ENCODE measurements at regions of chr7 and their contacts with region 1.

Region 1: DNA sequence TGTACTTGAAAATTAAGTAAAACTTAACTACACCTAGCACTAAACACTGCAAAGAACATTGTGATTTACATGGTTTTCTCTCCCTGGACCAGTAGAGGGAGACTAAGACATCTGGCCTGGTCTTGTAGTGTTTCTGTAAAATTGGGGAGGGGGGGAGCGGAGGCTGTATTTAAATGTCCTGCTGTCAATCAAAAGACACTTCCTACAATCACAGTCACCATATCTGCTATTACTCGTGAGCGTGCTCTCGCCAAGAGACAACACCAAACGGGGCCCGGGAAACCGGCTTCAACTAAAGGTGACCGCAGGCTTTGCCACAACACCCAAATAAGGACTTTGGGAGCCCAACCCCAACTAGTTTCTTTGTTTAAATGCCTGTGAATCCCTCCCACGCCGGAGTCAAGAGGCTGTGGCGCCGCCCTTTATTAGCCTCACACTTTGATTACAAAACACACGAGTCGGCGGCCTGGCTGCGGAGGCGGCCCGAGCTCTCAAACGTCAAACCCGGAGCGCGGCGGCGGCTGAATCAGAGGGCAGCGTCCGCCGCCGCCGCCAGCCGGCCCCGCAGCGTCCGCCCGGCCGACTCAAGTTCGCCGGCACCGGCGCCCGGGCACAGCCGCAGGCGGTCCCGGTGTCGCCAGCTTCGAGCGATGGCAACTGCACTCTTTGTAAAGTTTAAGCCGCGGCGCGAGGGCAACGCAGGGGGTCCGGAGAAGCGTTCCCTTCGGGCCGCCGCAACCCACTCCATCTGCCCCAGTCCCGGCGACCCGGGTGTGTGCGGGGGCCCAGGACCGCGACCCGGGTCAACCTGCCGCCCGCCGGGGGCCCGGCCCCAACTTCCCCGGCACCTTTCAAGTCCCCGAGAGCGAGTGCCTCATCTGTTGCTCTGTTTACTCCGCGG is 1.3 kb downstream of the KDM7A start:
- DNase-seq: peak; percentile 96
- ATAC-seq: peak; percentile 74
- H3K4me3 ChIP-seq: peak overlapping the region; percentile 80 to 93 (median 92)
- H3K27ac ChIP-seq: peak overlapping the region; percentile 81
- H3K4me1 ChIP-seq: peaks cover 59% of the 10 kb centered on the region
- H3K27me3 ChIP-seq: no peaks in the 10 kb centered on the region
- CTCF ChIP-seq: peak; percentile 85
- EP300 ChIP-seq: peak in 1 of 2 experiments; percentile 21; a peak in 1 of 4 replicates
- POLR2A ChIP-seq: peak in 1 of 2 experiments; percentile 46; a peak in 3 of 4 replicates
- RAD21 ChIP-seq: peak; percentile 73

Region 2: GRCh38 chr7:140192620-140193019 is 17.1 kb after region 1 on chr7:
- CTCF ChIA-PET with region 1: no interaction called
- POLR2A ChIA-PET with region 1: interaction called, 11 read pairs
- in situ Hi-C with region 1: no loop called
- intact Hi-C with region 1: no loop called
- DNase-seq: no peak
- ATAC-seq: no peak
- H3K4me3 ChIP-seq: no peak overlapping the region
- H3K27ac ChIP-seq: no peak overlapping the region
- H3K4me1 ChIP-seq: peaks cover 24% of the 10 kb centered on the region
- H3K27me3 ChIP-seq: peaks cover 0 to 7% of the 10 kb centered on the region in 2 experiments; a peak in 1 of 5 replicates
- CTCF ChIP-seq: no peak
- EP300 ChIP-seq: no peak
- POLR2A ChIP-seq: no peak
- RAD21 ChIP-seq: no peak

Region 3: GRCh38 chr7:140230861-140231770 is 55.6 kb after region 1 on chr7:
- CTCF ChIA-PET with region 1: no interaction called
- POLR2A ChIA-PET with region 1: interaction called, 128 read pairs
- in situ Hi-C with region 1: loop called (anchors 5 kb)
- intact Hi-C with region 1: loop called (anchors 1 kb)
- DNase-seq: peak; percentile 93
- ATAC-seq: peak; percentile 78
- H3K4me3 ChIP-seq: peak overlapping the region; percentile 57 to 76 (median 60)
- H3K27ac ChIP-seq: peak overlapping the region; percentile 99
- H3K4me1 ChIP-seq: peaks cover 86% of the 10 kb centered on the region
- H3K27me3 ChIP-seq: no peaks in the 10 kb centered on the region
- CTCF ChIP-seq: peak; percentile 83
- EP300 ChIP-seq: peak in 1 of 2 experiments; percentile 44; a peak in 1 of 4 replicates
- POLR2A ChIP-seq: peak; percentile 43 to 86; a peak in 3 of 4 replicates
- RAD21 ChIP-seq: 0 out of 2 replicates have a peak, but pooled peaks have one; percentile 21

Region 4: GRCh38 chr7:140249036-140249806 is 73.8 kb after region 1 on chr7:
- CTCF ChIA-PET with region 1: no interaction called
- POLR2A ChIA-PET with region 1: interaction called, 30 read pairs
- in situ Hi-C with region 1: no loop called
- intact Hi-C with region 1: loop called (anchors 1 kb)
- DNase-seq: peak; percentile 95
- ATAC-seq: peak; percentile 59
- H3K4me3 ChIP-seq: peak overlapping the region in 1 of 3 experiments; percentile 9; a peak in 1 of 6 replicates
- H3K27ac ChIP-seq: peak overlapping the region; percentile 68
- H3K4me1 ChIP-seq: peaks cover 95% of the 10 kb centered on the region
- H3K27me3 ChIP-seq: no peaks in the 10 kb centered on the region
- CTCF ChIP-seq: no peak
- EP300 ChIP-seq: peak; percentile 70 to 94; a peak in 3 of 4 replicates
- POLR2A ChIP-seq: no peak
- RAD21 ChIP-seq: no peak

Region 5: GRCh38 chr7:140326116-140326928 is 150.9 kb after region 1 on chr7:
- CTCF ChIA-PET with region 1: interaction called, 29 read pairs
- POLR2A ChIA-PET with region 1: interaction called, 8 read pairs
- in situ Hi-C with region 1: no loop called
- intact Hi-C with region 1: loop called (anchors 1 kb)
- DNase-seq: peak; percentile 63
- ATAC-seq: peak; percentile 93
- H3K4me3 ChIP-seq: peak overlapping the region; percentile 33 to 58 (median 49)
- H3K27ac ChIP-seq: no peak overlapping the region
- H3K4me1 ChIP-seq: peaks cover 27% of the 10 kb centered on the region
- H3K27me3 ChIP-seq: no peaks in the 10 kb centered on the region
- CTCF ChIP-seq: peak; percentile 93
- EP300 ChIP-seq: no peak
- POLR2A ChIP-seq: no peak
- RAD21 ChIP-seq: peak; percentile 91

Region 6: DNA sequence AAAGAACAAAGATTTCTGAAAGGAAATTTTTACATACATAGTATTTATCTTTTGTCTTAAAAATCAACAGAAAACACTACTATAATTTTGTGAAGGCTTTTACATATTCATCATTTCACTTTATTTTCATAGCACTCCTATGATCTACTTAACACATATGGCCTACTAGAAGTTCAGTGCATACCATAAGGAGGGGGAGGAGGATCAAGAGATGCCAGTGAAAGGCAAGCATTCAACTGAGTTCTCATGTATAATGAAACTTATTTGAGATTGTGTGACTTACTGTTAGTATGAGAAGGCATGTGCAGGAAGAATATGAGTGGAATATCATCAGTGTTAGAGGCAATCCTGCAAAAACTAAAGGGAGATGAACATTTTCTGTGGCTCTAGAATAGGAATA is 738.6 kb after region 1 on chr7:
- CTCF ChIA-PET with region 1: no interaction called
- POLR2A ChIA-PET with region 1: no interaction called
- in situ Hi-C with region 1: no loop called
- intact Hi-C with region 1: no loop called
- DNase-seq: no peak
- ATAC-seq: no peak
- H3K4me3 ChIP-seq: peak overlapping the region; percentile 20 to 60 (median 46); a peak in 5 of 6 replicates
- H3K27ac ChIP-seq: peak overlapping the region; percentile 75
- H3K4me1 ChIP-seq: peaks cover 36% of the 10 kb centered on the region
- H3K27me3 ChIP-seq: no peaks in the 10 kb centered on the region
- CTCF ChIP-seq: no peak
- EP300 ChIP-seq: no peak
- POLR2A ChIP-seq: no peak
- RAD21 ChIP-seq: no peak